K562 (cell line): ENCODE measurements at regions of chr2 and their contacts with region 1.

Region 1: DNA sequence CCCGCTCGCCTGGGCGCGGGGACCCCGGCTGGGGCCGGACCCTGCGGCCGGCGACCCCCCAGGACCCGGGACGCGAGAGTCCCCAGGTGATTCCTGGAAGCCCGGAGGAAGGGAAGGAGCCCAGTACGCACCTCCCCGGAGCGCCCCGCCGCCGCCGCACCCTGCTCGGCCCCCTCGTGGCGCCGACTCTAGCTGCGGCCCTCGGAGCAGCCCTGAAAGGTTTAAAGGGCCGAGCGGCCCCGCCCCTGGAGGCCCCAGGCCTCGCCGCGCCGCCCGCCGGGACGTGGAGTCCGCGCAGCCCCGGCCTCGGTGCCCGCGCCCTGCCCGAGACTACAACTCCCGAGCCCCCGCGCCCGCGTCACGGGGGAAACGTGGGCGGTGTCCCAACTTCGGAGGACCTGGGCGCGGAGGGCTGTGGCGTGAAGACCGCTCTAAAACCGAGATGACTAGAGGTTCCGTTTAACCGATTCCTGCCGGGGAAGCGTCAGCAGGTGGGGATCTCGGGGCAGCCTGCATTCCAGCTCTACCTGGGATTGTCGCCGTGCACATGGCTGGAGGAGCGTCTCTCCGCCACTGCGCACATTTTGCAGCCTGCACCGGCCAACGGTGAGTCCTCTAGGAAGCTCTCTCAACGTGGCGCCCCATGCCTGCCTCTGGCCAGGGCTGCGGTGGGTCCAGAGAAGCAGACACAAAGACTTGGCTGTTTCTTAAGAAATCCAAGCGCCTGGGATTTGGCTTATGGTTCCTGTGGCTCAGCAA is at the start of gene TMEM150A:
- DNase-seq: peak; percentile 88 to 94 (median 90)
- ATAC-seq: peak; percentile 97
- H3K4me3 ChIP-seq: peak within 1 kb of the TSS; percentile 79
- H3K27ac ChIP-seq: peak within 1 kb of the TSS; percentile 27
- H3K4me1 ChIP-seq: peaks cover 9 to 34% of the 10 kb centered on the region in 2 experiments; a peak in 4 of 5 replicates
- H3K27me3 ChIP-seq: no peaks in the 10 kb centered on the region
- CTCF ChIP-seq: peak; percentile 22 to 57 (median 45); a peak in 4 of 6 replicates
- EP300 ChIP-seq: no peak
- POLR2A ChIP-seq: peak; percentile 24; the same call in 1 of the 2 replicates
- RAD21 ChIP-seq: peak; percentile 43 to 46; a peak in 3 of 4 replicates
- polyA plus RNA-seq, gene TMEM150A: 3.9 to 5.3 TPM

Region 2: GRCh38 chr2:85561317-85561979 is 41.2 kb before region 1 on chr2 and contains the start of gene GGCX:
- CTCF ChIA-PET with region 1: interaction called, 3 read pairs
- POLR2A ChIA-PET with region 1: no interaction called
- in situ Hi-C with region 1: no loop called
- intact Hi-C with region 1: loop called (anchors 2 kb)
- DNase-seq: peak; percentile 90 to 97 (median 92)
- ATAC-seq: peak; percentile 94
- H3K4me3 ChIP-seq: peak within 1 kb of the TSS; percentile 79
- H3K27ac ChIP-seq: peak within 1 kb of the TSS; percentile 95
- H3K4me1 ChIP-seq: peaks cover 18 to 26% of the 10 kb centered on the region in 2 experiments
- H3K27me3 ChIP-seq: no peaks in the 10 kb centered on the region
- CTCF ChIP-seq: peak in 1 of 3 experiments; percentile 12; a peak in 1 of 6 replicates
- EP300 ChIP-seq: no peak
- POLR2A ChIP-seq: peak; percentile 95
- RAD21 ChIP-seq: peak in 1 of 2 experiments; percentile 8; a peak in 1 of 4 replicates
- polyA plus RNA-seq, gene GGCX: 46.7 to 47.1 TPM

Region 3: GRCh38 chr2:85589982-85590791 is 12.5 kb before region 1 on chr2:
- CTCF ChIA-PET with region 1: no interaction called
- POLR2A ChIA-PET with region 1: interaction called, 31 read pairs
- in situ Hi-C with region 1: no loop called
- intact Hi-C with region 1: no loop called
- DNase-seq: no peak
- ATAC-seq: no peak
- H3K4me3 ChIP-seq: no peak overlapping the region
- H3K27ac ChIP-seq: no peak overlapping the region
- H3K4me1 ChIP-seq: peaks cover 31 to 34% of the 10 kb centered on the region in 2 experiments
- H3K27me3 ChIP-seq: no peaks in the 10 kb centered on the region
- CTCF ChIP-seq: no peak
- EP300 ChIP-seq: no peak
- POLR2A ChIP-seq: no peak
- RAD21 ChIP-seq: no peak